ENCODE measurements at regions of chr5 and their contacts with region 1.

Region 1: GRCh38 chr5:39231705-39232525 is 12.6 kb upstream of the FYB1 start:
- DNase-seq: no peak
- H3K4me3 ChIP-seq: no peak overlapping the region
- H3K27ac ChIP-seq: no peak overlapping the region
- H3K4me1 ChIP-seq: no peaks in the 10 kb centered on the region
- H3K27me3 ChIP-seq: no peaks in the 10 kb centered on the region
- CTCF ChIP-seq: no peak
- POLR2A ChIP-seq: no peak

Region 2: GRCh38 chr5:38078161-38078560 is 1153.8 kb before region 1 on chr5:
- intact Hi-C with region 1: loop called (anchors 5 kb)
- DNase-seq: no peak
- H3K4me3 ChIP-seq: no peak overlapping the region
- H3K27ac ChIP-seq: no peak overlapping the region
- H3K4me1 ChIP-seq: no peaks in the 10 kb centered on the region
- H3K27me3 ChIP-seq: no peaks in the 10 kb centered on the region
- CTCF ChIP-seq: no peak
- POLR2A ChIP-seq: no peak

Region 3: DNA sequence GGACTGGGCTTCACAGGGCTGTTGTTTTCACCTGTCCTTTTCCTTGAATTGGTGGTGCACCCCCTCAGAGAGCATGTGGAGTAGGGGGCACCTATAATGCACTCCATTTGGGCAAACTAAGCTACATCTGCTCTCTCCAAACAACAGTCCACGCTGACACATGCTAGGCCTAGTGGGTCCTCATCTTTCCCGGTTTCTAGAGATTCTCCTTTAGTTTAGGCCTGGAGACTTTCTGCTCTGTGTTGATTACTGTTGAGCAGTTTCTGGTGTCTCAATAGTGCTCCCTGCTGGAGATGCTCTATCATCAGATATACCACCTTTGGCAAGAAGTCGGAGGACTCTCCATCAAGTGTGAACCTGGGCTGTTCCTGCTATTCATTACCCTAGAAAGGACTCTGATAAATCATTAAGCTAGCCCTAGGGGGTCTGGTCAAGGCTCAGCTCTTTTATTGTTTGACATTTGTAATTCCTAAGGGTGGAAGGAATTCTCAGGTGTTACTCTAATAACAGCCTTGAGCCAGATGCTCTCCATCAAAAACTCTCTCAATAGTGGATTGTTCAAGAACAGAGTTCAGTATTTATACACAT is 51.4 kb after region 1 on chr5:
- intact Hi-C with region 1: no loop called
- DNase-seq: no peak
- H3K4me3 ChIP-seq: no peak overlapping the region
- H3K27ac ChIP-seq: no peak overlapping the region
- H3K4me1 ChIP-seq: no peaks in the 10 kb centered on the region
- H3K27me3 ChIP-seq: no peaks in the 10 kb centered on the region
- CTCF ChIP-seq: peak in 2 of 3 experiments; percentile 35 to 57
- POLR2A ChIP-seq: no peak